Dendritic cell treated with granulocyte-macrophage colony-stimulating factor and Interleukin-4, amounts not matched to agents 40 ng/mL and 50 ng/mL, for 4 days (primary cell): ENCODE measurements at regions of chr1 and their contacts with region 1.

Region 1: DNA sequence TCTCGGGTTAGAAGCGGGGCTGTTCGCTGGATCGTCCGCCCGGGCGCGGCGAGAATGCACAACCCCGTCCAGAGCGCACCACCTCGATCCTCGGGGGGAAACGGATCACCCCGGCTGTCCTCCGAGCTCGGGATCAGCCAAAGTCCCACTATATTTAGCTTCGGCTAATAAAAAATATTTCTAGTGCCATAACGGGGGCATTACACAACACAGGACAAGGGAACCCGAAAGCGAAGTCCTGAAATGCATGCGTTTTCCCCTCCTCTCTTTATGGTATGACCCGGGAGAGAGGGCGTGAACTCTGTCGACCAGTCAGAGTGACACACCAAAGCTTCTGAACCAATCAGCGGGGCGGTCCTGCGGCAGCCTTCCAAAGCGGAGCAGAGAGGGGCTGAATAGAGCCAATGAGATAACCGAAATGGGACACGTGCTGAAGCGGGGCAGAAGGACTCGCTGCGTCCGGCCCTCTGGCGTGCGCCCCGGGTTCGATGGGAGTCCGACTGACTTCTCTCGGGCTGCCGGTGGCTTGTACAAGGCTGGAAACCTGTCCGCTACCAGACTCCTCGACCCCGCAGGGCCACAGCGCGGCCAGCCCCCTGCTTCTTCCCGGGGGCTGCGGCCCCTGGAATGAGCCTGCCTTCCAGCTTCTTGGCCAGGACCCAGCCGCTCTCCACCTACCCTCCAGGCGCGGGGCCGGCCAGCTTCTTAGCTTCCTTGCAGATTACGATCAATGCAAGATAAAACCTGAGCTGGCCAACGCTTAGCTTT is at the start of gene ALDH4A1:
- H3K4me3 Mint-ChIP-seq: peak within 1 kb of the TSS; percentile 87
- H3K27ac Mint-ChIP-seq: peak within 1 kb of the TSS; percentile 98
- H3K4me1 Mint-ChIP-seq: peaks cover 48% of the 10 kb centered on the region
- H3K27me3 Mint-ChIP-seq: no peaks in the 10 kb centered on the region

Region 2: GRCh38 chr1:18956369-18957135 is 53.8 kb after region 1 on chr1 and contains the start of gene IFFO2:
- intact Hi-C with region 1: loop called (anchors 2 kb)
- H3K4me3 Mint-ChIP-seq: peak within 1 kb of the TSS; percentile 92
- H3K27ac Mint-ChIP-seq: peak within 1 kb of the TSS; percentile 84
- H3K4me1 Mint-ChIP-seq: peaks cover 52% of the 10 kb centered on the region
- H3K27me3 Mint-ChIP-seq: peaks cover 56% of the 10 kb centered on the region

Region 3: GRCh38 chr1:19081218-19081893 is 178.6 kb after region 1 on chr1:
- intact Hi-C with region 1: loop called (anchors 5 kb)
- H3K4me3 Mint-ChIP-seq: peak overlapping the region; percentile 71
- H3K27ac Mint-ChIP-seq: peak overlapping the region; percentile 63
- H3K4me1 Mint-ChIP-seq: peaks cover 32% of the 10 kb centered on the region
- H3K27me3 Mint-ChIP-seq: no peaks in the 10 kb centered on the region

Region 4: DNA sequence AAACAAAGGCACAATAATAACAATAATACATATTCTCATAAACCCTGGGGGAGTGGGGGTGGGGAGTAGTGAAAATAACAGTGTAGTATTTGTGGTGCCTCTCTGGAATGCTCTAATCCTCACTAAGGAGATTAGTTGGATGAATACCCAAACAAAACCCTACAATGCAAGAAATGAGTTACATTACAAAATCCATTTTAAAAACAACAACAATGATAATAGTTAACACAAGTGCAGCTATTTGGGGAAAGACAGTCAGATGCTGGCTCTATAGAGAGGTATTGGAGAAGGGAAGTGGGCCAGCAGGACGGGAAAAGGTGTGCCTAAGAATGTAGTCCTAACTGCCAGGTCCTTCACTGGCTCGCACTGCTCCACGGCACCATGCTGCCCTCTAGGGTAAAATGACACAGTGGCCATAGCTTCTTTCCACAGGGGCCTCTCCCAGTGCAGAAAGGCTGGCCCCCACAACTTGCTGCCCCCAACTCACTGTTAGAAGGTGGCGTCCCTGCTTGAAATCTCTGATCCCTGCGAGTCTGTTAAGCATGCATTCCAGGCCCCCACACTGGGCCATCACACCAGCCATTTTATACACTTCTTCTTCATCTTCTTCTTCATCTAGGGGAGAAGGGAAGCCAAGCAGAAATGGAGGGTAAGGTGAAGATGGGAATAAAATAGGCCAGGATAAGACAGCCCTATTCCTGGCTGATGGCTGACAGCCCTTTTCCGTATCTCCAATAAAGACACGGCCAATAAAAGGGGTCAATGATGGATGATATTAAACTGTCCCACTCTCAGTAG is 193.5 kb after region 1 on chr1:
- intact Hi-C with region 1: loop called (anchors 5 kb)
- H3K4me3 Mint-ChIP-seq: no peak overlapping the region
- H3K27ac Mint-ChIP-seq: no peak overlapping the region
- H3K4me1 Mint-ChIP-seq: no peaks in the 10 kb centered on the region
- H3K27me3 Mint-ChIP-seq: no peaks in the 10 kb centered on the region

Region 5: GRCh38 chr1:19163261-19163660 is 260.6 kb after region 1 on chr1:
- intact Hi-C with region 1: no loop called
- H3K4me3 Mint-ChIP-seq: no peak overlapping the region
- H3K27ac Mint-ChIP-seq: no peak overlapping the region
- H3K4me1 Mint-ChIP-seq: peaks cover 14% of the 10 kb centered on the region
- H3K27me3 Mint-ChIP-seq: no peaks in the 10 kb centered on the region